ENCODE measurements at regions of chr12 and their contacts with region 1.

Region 1: DNA sequence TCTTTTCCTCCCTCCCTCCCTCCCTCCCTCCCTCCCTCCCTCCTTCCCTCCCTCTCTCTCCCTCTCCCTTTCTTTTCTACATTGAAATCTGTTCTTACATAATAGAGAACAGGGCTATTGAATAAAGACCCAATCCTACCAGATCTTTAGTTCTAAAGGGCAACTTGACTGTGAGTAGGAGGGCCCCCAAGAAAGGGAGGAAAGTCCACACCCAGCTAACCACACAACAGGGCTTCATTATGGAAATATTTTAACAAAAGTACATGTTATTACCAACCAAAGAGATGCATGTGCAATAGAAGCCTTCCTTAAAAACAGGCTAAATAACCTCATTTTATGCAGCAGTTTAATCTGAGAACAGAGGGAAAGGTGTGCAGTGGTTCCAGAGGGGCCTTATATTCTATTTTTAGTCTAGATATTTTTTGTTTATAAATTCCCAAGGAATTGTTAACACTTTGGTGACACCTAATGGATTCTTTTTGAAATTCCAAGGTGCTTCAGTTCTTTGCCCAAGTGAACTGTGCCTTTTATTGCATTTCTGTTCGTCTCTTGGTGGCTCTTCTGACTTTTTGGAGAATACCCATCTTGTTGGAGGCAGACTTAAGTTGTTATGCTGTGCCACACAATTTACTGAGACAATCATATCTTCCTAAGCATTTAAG is 63.0 kb downstream of the GNS start:
- DNase-seq: no peak
- ATAC-seq: no peak
- H3K4me3 ChIP-seq: no peak overlapping the region
- H3K27ac ChIP-seq: no peak overlapping the region
- H3K4me1 ChIP-seq: 0 out of 2 replicates have a peak, but pooled peaks cover 3% of the 10 kb centered on the region
- H3K27me3 ChIP-seq: no peaks in the 10 kb centered on the region
- CTCF ChIP-seq: peak in 1 of 3 experiments; percentile 40; a peak in 2 of 6 replicates
- EP300 ChIP-seq: no peak
- POLR2A ChIP-seq: no peak
- RAD21 ChIP-seq: peak; percentile 45

Region 2: DNA sequence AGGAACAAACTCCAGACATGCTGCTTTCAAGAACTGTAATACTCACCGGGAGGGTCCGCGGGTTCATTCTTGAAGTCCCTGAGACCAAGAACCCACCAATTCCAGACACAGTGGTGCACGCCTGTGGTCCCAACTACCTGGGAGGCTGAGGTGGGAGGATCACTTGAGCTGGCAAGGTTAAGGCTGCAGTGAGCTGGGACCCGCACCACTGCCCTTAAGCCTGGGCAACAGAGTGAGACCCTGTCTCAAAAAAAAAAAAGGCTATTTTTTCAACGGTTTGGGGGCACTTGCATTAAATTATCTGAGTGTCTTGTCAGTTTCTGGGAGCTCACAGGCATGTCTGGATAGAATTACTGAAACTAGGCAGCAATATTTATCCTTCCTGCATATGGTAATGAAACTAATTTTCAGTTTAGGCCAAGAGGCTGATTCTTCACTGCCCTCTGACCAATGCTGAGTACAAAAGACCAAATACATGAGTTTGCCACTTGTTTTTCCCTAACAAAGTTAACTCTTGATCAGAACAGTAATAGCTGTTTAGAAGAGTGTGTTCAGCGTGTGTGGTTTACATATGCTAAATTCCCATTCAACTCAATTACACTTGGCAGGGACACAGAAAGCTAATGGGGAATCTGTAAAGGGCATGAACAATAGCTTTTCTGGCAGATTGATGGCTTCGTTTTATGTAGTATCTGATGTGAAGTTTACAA is 151.7 kb before region 1 on chr12:
- CTCF ChIA-PET with region 1: interaction called, 175 read pairs
- POLR2A ChIA-PET with region 1: no interaction called
- RAD21 ChIA-PET with region 1: interaction called, 103 read pairs
- SMC1A ChIA-PET with region 1: interaction called, 139 read pairs
- in situ Hi-C with region 1: no loop called
- intact Hi-C with region 1: loop called (anchors 1 kb)
- DNase-seq: no peak
- ATAC-seq: no peak
- H3K4me3 ChIP-seq: no peak overlapping the region
- H3K27ac ChIP-seq: no peak overlapping the region
- H3K4me1 ChIP-seq: no peaks in the 10 kb centered on the region; the same call in 1 of the 2 replicates
- H3K27me3 ChIP-seq: no peaks in the 10 kb centered on the region
- CTCF ChIP-seq: no peak
- EP300 ChIP-seq: no peak
- POLR2A ChIP-seq: no peak
- RAD21 ChIP-seq: no peak

Region 3: DNA sequence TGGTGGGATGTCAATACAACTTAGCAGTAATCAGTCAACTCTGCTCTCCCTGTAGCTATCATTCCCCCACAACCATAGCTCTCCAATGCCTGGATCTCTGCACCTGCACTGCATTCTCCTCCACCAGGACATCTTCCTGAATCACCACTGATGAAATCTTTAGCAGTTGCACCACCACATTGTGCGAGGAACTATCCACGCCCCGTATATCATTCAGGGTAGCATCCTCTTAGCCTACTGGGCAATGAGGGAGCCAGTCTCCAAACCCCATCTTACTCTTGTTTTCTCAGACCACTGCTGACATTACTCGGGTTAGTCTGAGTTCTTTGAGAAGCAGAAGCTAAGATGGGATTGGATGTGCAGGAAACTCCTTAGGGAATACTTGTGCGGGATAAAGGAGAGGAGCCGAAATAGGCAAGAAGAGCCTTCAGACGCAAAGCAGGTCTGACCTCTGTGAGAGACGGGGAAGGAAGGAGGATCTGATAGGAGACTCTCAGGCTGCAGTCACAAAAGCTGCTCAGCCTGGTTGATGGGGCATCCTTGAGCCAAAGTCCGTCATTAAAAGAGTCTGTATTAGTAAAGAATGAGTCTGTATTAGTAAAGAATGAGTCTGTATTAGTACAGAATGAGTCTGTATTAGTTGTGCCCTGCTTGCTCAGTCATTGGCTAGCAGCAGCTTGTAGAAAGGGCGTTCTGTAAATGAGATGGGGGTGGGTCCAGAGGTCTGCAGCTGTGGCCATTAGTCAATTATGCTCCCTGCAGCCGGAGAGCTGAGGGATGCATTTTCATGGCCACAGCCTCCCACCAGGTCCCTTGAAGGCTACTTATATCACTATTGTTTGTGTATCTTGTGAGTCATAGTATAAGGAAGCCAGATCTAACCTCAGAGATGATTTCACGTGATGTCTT is 135.6 kb before region 1 on chr12:
- CTCF ChIA-PET with region 1: interaction called, 4 read pairs
- POLR2A ChIA-PET with region 1: no interaction called
- RAD21 ChIA-PET with region 1: interaction called, 4 read pairs
- SMC1A ChIA-PET with region 1: interaction called, 3 read pairs
- in situ Hi-C with region 1: loop called (anchors 5 kb)
- intact Hi-C with region 1: no loop called
- DNase-seq: no peak
- ATAC-seq: no peak; the same call in 1 of the 3 replicates
- H3K4me3 ChIP-seq: no peak overlapping the region
- H3K27ac ChIP-seq: no peak overlapping the region
- H3K4me1 ChIP-seq: no peaks in the 10 kb centered on the region
- H3K27me3 ChIP-seq: no peaks in the 10 kb centered on the region
- CTCF ChIP-seq: no peak
- EP300 ChIP-seq: no peak
- POLR2A ChIP-seq: no peak
- RAD21 ChIP-seq: no peak

Region 4: DNA sequence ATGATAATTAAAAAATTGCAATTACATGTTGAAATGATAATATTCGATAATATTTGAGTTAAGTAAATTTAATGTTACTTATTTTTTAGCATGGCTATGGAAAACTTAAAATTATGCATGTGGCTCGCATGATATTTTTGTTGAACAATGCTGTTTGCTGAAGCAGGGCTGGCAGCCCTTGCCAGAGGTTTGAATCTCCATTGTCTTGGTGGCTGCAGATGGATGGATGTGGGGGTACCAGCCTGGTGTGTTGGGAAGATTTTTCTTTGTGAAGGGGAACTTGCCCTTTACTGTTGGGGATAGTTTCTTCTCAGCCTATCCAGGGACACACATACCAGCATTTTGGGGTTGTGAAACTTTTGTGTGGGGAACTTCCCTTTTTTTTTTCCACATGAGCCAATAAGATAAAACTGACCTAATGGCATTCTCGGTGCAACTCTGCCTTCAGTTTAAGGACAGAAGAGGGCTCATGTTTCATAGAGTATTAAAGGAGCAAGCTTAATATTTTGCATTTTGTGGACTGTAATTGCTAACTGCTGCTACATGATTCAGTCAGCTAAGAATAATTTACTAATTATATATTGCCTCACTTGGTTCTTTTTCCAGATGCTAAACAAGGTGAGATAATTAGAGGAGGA is 77.1 kb before region 1 on chr12:
- CTCF ChIA-PET with region 1: interaction called, 14 read pairs
- POLR2A ChIA-PET with region 1: interaction called, 3 read pairs
- RAD21 ChIA-PET with region 1: interaction called, 7 read pairs
- SMC1A ChIA-PET with region 1: interaction called, 20 read pairs
- in situ Hi-C with region 1: no loop called
- intact Hi-C with region 1: no loop called
- DNase-seq: peak; percentile 77
- ATAC-seq: peak; percentile 59
- H3K4me3 ChIP-seq: peak overlapping the region; percentile 57
- H3K27ac ChIP-seq: peak overlapping the region; percentile 93
- H3K4me1 ChIP-seq: peaks cover 49% of the 10 kb centered on the region
- H3K27me3 ChIP-seq: no peaks in the 10 kb centered on the region
- CTCF ChIP-seq: no peak
- EP300 ChIP-seq: peak; percentile 38 to 42; a peak in 1 of 4 replicates
- POLR2A ChIP-seq: no peak
- RAD21 ChIP-seq: 0 out of 2 replicates have a peak, but pooled peaks have one; percentile 6

Region 5: DNA sequence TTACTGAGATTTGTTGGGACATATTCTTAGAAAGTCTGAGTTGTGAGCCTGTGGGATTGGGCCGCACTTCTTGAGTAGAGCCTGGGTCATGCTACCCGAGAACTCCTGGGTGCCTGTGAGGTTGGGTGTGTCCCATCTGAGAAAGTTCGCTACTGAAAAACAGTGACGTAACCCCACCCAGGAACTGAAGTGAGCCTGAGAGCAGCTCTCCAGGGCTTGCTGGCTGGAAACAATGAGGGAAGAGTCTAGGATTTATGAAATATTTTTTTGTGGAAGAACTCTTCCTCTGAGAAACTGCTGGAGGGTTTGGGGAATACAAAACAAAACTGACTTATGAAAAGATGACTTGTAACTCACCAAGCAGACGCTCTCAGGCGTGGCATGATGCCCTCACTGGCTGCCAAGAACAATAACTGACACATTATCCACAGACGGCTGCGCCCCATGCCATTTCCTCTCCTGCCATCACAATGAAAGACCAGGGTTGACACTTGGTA is 16.7 kb before region 1 on chr12:
- CTCF ChIA-PET with region 1: interaction called, 48 read pairs
- POLR2A ChIA-PET with region 1: interaction called, 10 read pairs
- RAD21 ChIA-PET with region 1: interaction called, 5 read pairs
- SMC1A ChIA-PET with region 1: interaction called, 10 read pairs
- in situ Hi-C with region 1: no loop called
- intact Hi-C with region 1: no loop called
- DNase-seq: no peak
- ATAC-seq: peak; percentile 53
- H3K4me3 ChIP-seq: no peak overlapping the region
- H3K27ac ChIP-seq: peak overlapping the region; percentile 35; the same call in 1 of the 2 replicates
- H3K4me1 ChIP-seq: peaks cover 53% of the 10 kb centered on the region
- H3K27me3 ChIP-seq: no peaks in the 10 kb centered on the region
- CTCF ChIP-seq: no peak
- EP300 ChIP-seq: no peak
- POLR2A ChIP-seq: no peak
- RAD21 ChIP-seq: no peak

Region 6: GRCh38 chr12:64790222-64790621 is 94.0 kb after region 1 on chr12:
- CTCF ChIA-PET with region 1: no interaction called
- POLR2A ChIA-PET with region 1: no interaction called
- RAD21 ChIA-PET with region 1: no interaction called
- SMC1A ChIA-PET with region 1: no interaction called
- in situ Hi-C with region 1: no loop called
- intact Hi-C with region 1: no loop called
- DNase-seq: no peak
- ATAC-seq: no peak
- H3K4me3 ChIP-seq: no peak overlapping the region
- H3K27ac ChIP-seq: no peak overlapping the region
- H3K4me1 ChIP-seq: no peaks in the 10 kb centered on the region
- H3K27me3 ChIP-seq: no peaks in the 10 kb centered on the region; a peak in 1 of 4 replicates
- CTCF ChIP-seq: no peak
- EP300 ChIP-seq: no peak
- POLR2A ChIP-seq: no peak
- RAD21 ChIP-seq: no peak